A549 (cell line): ENCODE measurements at regions of chr5 and their contacts with region 1.

Region 1: GRCh38 chr5:168317521-168318147 is 26.2 kb downstream of the WWC1 start:
- DNase-seq: peak; percentile 95 to 98
- ATAC-seq: peak; percentile 64 to 65
- H3K4me3 ChIP-seq: 0 out of 3 replicates have a peak overlapping the region, but pooled peaks have one; percentile 3
- H3K27ac ChIP-seq: peak overlapping the region; percentile 92 to 98
- H3K4me1 ChIP-seq: peaks cover 88% of the 10 kb centered on the region
- CTCF ChIP-seq: no peak
- EP300 ChIP-seq: peak; percentile 98
- POLR2A ChIP-seq: no peak
- RAD21 ChIP-seq: peak; percentile 28 to 53; a peak in 4 of 5 replicates

Region 2: GRCh38 chr5:168030912-168031311 is 286.7 kb before region 1 on chr5:
- CTCF ChIA-PET with region 1: no interaction called
- POLR2A ChIA-PET with region 1: no interaction called
- DNase-seq: no peak
- ATAC-seq: no peak
- H3K4me3 ChIP-seq: no peak overlapping the region
- H3K27ac ChIP-seq: no peak overlapping the region
- H3K4me1 ChIP-seq: no peaks in the 10 kb centered on the region
- CTCF ChIP-seq: no peak
- EP300 ChIP-seq: no peak
- POLR2A ChIP-seq: no peak
- RAD21 ChIP-seq: no peak

Region 3: GRCh38 chr5:168291464-168291961 is 26.1 kb before region 1 on chr5 and contains the start of gene WWC1:
- CTCF ChIA-PET with region 1: interaction called, 256 read pairs
- POLR2A ChIA-PET with region 1: interaction called, 4 read pairs
- DNase-seq: peak; percentile 84 to 86
- ATAC-seq: peak; percentile 72 to 84
- H3K4me3 ChIP-seq: peak within 1 kb of the TSS; percentile 94
- H3K27ac ChIP-seq: peak within 1 kb of the TSS; percentile 97
- H3K4me1 ChIP-seq: peaks cover 67% of the 10 kb centered on the region
- CTCF ChIP-seq: peak; percentile 32; the same call in 2 of the 3 replicates
- EP300 ChIP-seq: no peak
- POLR2A ChIP-seq: peak; percentile 59
- RAD21 ChIP-seq: peak; percentile 16 to 39; a peak in 3 of 5 replicates
- polyA plus RNA-seq, gene WWC1: 75.0 and 98.1 TPM in 2 replicates

Region 4: GRCh38 chr5:168301593-168302388 is 15.8 kb before region 1 on chr5:
- CTCF ChIA-PET with region 1: interaction called, 256 read pairs
- POLR2A ChIA-PET with region 1: interaction called, 24 read pairs
- DNase-seq: peak; percentile 91 to 96
- ATAC-seq: peak; percentile 83 to 84
- H3K4me3 ChIP-seq: peak overlapping the region; percentile 22; the same call in 2 of the 3 replicates
- H3K27ac ChIP-seq: peak overlapping the region; percentile 91 to 92
- H3K4me1 ChIP-seq: peaks cover 98% of the 10 kb centered on the region
- CTCF ChIP-seq: no peak
- EP300 ChIP-seq: peak in 1 of 2 experiments; percentile 82; a peak in 3 of 5 replicates
- POLR2A ChIP-seq: no peak
- RAD21 ChIP-seq: peak in 1 of 2 experiments; percentile 9; a peak in 3 of 5 replicates

Region 5: DNA sequence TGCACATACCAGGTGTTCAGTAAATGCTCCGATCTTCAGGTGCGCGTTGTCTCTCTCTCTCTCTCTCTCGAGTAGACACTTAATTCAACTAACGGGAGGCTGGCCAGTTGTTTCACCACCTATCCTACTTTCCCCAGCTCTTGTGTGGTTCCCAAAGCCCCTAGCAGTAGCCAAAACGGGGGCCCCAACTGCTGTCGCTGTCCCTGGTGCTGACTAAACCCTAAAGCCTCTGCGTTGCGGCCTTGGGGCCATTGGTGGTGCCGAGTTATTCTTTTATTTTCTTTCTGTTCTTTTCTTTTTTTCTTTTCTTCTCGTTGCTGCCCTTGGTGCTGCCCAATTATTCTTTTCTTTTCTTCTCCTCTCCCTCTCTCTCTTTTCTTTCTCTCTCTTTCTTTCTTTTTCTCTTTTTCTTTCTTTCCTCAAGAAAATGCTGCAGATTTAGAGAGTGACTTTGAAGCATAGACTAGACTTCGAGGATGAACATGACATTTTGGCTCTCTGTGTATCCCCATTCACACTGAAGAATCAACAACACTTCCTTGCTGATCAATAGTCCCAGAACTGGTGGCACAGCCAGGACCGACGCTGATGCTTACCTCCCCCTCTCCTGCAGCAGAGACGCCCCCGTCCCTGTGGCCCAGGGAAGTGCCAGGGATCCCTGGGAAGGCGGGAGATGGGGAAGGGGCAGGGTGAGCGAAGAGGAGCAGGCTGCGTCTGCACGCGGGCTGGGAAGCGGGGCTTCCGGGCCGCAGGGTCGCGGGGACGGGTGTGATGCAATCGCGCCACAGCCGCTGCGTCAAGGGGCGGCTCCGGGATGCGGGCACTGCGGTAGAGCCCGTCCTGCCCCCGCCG is 211.1 kb after region 1 on chr5 and contains the start of gene FBLL1:
- CTCF ChIA-PET with region 1: no interaction called
- POLR2A ChIA-PET with region 1: no interaction called
- DNase-seq: no peak
- ATAC-seq: 0 out of 6 replicates have a peak, but pooled peaks of 1 of the 2 experiments have one; percentile 5
- H3K4me3 ChIP-seq: peak within 1 kb of the TSS; percentile 40
- H3K27ac ChIP-seq: peak within 1 kb of the TSS in 1 of 2 experiments; percentile 44; a peak in 2 of 6 replicates
- H3K4me1 ChIP-seq: no peaks in the 10 kb centered on the region
- CTCF ChIP-seq: no peak
- EP300 ChIP-seq: no peak
- POLR2A ChIP-seq: no peak
- RAD21 ChIP-seq: no peak
- polyA plus RNA-seq, gene FBLL1: 0.08 and 0.09 TPM in 2 replicates